Endothelial cell of umbilical vein (primary cell): ENCODE measurements at regions of chr1 and their contacts with region 1.

Region 1: GRCh38 chr1:211514030-211514754 is 22.2 kb upstream of the RD3 start:
- DNase-seq: peak; percentile 82
- H3K4me3 ChIP-seq: no peak overlapping the region
- H3K27ac ChIP-seq: no peak overlapping the region
- H3K4me1 ChIP-seq: peaks cover 10% of the 10 kb centered on the region
- H3K27me3 ChIP-seq: no peaks in the 10 kb centered on the region
- CTCF ChIP-seq: peak; percentile 78 to 85
- POLR2A ChIP-seq: no peak

Region 2: GRCh38 chr1:211133836-211134669 is 380.1 kb before region 1 on chr1 and contains the start of gene KCNH1:
- CTCF ChIA-PET with region 1: interaction called, 10 read pairs
- POLR2A ChIA-PET with region 1: no interaction called
- dilution Hi-C with region 1: no loop called
- intact Hi-C with region 1: loop called (anchors 2 kb)
- DNase-seq: peak; percentile 77
- H3K4me3 ChIP-seq: peak within 1 kb of the TSS in 1 of 3 experiments; percentile 17
- H3K27ac ChIP-seq: no peak within 1 kb of the TSS
- H3K4me1 ChIP-seq: peaks cover 2% of the 10 kb centered on the region
- H3K27me3 ChIP-seq: peaks cover 11 to 31% of the 10 kb centered on the region in 2 experiments
- CTCF ChIP-seq: peak; percentile 84 to 96
- POLR2A ChIP-seq: no peak
- total RNA-seq, gene KCNH1: not detected in 2 replicates

Region 3: GRCh38 chr1:211415700-211416099 is 98.5 kb before region 1 on chr1:
- CTCF ChIA-PET with region 1: interaction called, 10 read pairs
- POLR2A ChIA-PET with region 1: no interaction called
- dilution Hi-C with region 1: no loop called
- intact Hi-C with region 1: loop called (anchors 5 kb)
- DNase-seq: no peak
- H3K4me3 ChIP-seq: no peak overlapping the region
- H3K27ac ChIP-seq: no peak overlapping the region
- H3K4me1 ChIP-seq: no peaks in the 10 kb centered on the region
- H3K27me3 ChIP-seq: no peaks in the 10 kb centered on the region
- CTCF ChIP-seq: no peak
- POLR2A ChIP-seq: no peak

Region 4: GRCh38 chr1:211541720-211542453 is 27.7 kb after region 1 on chr1:
- CTCF ChIA-PET with region 1: interaction called, 12 read pairs
- POLR2A ChIA-PET with region 1: no interaction called
- dilution Hi-C with region 1: no loop called
- intact Hi-C with region 1: no loop called
- DNase-seq: peak; percentile 84
- H3K4me3 ChIP-seq: no peak overlapping the region
- H3K27ac ChIP-seq: no peak overlapping the region
- H3K4me1 ChIP-seq: peaks cover 14% of the 10 kb centered on the region
- H3K27me3 ChIP-seq: no peaks in the 10 kb centered on the region
- CTCF ChIP-seq: no peak
- POLR2A ChIP-seq: no peak

Region 5: GRCh38 chr1:211639500-211640300 is 125.5 kb after region 1 on chr1:
- CTCF ChIA-PET with region 1: interaction called, 17 read pairs
- POLR2A ChIA-PET with region 1: no interaction called
- dilution Hi-C with region 1: no loop called
- intact Hi-C with region 1: no loop called
- DNase-seq: peak; percentile 96
- H3K4me3 ChIP-seq: peak overlapping the region in 2 of 3 experiments; percentile 31 to 37
- H3K27ac ChIP-seq: peak overlapping the region; percentile 95
- H3K4me1 ChIP-seq: peaks cover 27% of the 10 kb centered on the region
- H3K27me3 ChIP-seq: no peaks in the 10 kb centered on the region
- CTCF ChIP-seq: no peak
- POLR2A ChIP-seq: no peak